K562 (cell line): ENCODE measurements at regions of chr20 and their contacts with region 1.

Region 1: GRCh38 chr20:58971429-58971828 is 9.6 kb upstream of the NELFCD start:
- DNase-seq: no peak
- ATAC-seq: no peak
- H3K4me3 ChIP-seq: no peak overlapping the region
- H3K27ac ChIP-seq: no peak overlapping the region
- H3K4me1 ChIP-seq: no peaks in the 10 kb centered on the region
- H3K27me3 ChIP-seq: peaks cover 19 to 27% of the 10 kb centered on the region in 2 experiments
- CTCF ChIP-seq: no peak
- EP300 ChIP-seq: no peak
- POLR2A ChIP-seq: no peak
- RAD21 ChIP-seq: no peak

Region 2: GRCh38 chr20:58959652-58960051 is 11.8 kb before region 1 on chr20:
- CTCF ChIA-PET with region 1: no interaction called
- POLR2A ChIA-PET with region 1: interaction called, 17 read pairs
- in situ Hi-C with region 1: no loop called
- intact Hi-C with region 1: no loop called
- DNase-seq: no peak
- ATAC-seq: peak; percentile 45
- H3K4me3 ChIP-seq: no peak overlapping the region
- H3K27ac ChIP-seq: no peak overlapping the region
- H3K4me1 ChIP-seq: no peaks in the 10 kb centered on the region
- H3K27me3 ChIP-seq: peaks cover 15 to 17% of the 10 kb centered on the region in 2 experiments
- CTCF ChIP-seq: no peak
- EP300 ChIP-seq: no peak
- POLR2A ChIP-seq: no peak
- RAD21 ChIP-seq: no peak

Region 3: DNA sequence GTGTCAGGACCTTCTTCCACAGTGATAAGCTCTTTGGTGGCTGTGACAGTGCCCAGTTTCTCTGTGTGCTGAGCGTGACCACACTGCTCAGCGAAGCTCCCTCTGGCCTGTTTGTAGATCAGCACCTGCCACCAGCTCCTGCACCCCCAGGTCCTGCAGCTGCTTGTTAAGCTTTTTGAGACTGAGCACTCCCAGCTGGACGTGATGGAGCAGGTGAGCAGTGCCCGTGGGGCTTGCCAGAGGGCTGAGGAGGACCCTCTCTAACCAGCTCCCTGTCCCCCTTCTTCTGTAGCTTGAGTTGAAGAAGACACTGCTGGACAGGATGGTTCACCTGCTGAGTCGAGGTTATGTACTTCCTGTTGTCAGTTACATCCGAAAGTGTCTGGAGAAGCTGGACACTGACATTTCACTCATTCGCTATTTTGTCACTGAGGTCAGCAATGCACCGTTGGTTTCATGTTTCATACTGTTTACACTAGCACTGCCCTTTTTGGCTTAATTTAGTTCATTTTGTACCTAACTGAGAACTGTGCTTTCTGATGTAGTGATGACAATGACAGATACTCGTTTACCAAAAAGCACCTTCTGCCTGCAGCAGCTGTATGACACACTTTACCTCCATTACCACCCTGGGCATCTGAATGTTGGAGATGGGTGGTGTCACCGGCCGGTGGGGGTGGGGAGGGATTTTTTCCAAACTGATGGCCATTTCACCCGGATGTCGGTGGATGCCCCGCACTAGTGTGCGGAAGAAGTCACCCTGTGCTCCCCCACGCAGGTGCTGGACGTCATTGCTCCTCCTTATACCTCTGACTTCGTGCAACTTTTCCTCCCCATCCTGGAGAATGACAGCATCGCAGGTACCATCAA is 22.1 kb after region 1 on chr20:
- CTCF ChIA-PET with region 1: no interaction called
- POLR2A ChIA-PET with region 1: no interaction called
- in situ Hi-C with region 1: no loop called
- intact Hi-C with region 1: no loop called
- DNase-seq: no peak
- ATAC-seq: no peak; the same call in 2 of the 3 replicates
- H3K4me3 ChIP-seq: no peak overlapping the region
- H3K27ac ChIP-seq: no peak overlapping the region
- H3K4me1 ChIP-seq: peaks cover 0 to 7% of the 10 kb centered on the region in 2 experiments; a peak in 1 of 5 replicates
- H3K27me3 ChIP-seq: no peaks in the 10 kb centered on the region
- CTCF ChIP-seq: no peak
- EP300 ChIP-seq: no peak
- POLR2A ChIP-seq: 0 out of 2 replicates have a peak, but pooled peaks have one; percentile 15
- RAD21 ChIP-seq: no peak